Activated CD4-positive, alpha-beta T cell treated with anti-CD3 and anti-CD28 coated beads, Interleukin-2, amount 10 ng/mL, durations not matched to agents 24 days and 14 days (primary cell): ENCODE measurements at regions of chr5 and their contacts with region 1.

Region 1: DNA sequence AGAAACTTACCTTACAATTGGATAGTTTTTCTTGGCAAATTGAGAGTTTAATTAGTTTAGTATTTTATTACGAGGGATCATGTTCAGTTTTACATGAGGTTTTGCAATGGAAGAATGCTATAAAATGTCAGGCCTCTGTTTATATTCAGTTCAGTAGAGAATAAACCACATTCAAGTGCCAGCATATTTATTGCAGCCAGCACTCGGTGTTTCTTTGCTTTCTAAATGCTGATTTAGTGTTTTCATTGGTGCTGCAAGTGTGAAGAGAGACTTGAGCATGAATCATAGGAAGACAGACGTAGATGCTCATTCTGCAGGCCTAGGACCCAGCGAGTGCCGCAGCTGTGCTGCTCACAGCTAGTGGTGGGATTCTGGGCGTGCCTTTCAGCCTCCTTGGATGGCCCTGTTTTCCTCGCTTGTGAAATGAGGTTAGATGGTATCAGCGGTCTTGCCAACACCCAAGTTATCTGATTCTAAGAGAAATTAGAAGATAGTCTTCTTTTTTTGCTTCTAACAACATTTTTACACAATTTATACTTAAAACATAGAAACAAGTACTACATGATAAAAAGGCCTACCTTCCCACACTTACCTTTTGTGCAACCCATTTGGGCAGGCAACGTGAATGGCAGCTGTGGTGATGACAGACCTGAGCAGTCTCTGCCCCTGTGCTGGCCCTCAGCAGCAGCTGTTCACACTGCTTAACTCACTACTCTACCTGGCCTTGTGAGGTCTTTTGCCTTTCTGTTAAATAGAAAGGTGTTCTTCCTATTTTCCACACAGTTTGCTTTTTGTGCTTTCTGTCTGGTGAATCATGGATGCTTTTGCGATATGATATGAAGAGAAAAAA is 26.8 kb upstream of the TNFAIP8 start:
- DNase-seq: peak; percentile 86
- H3K4me3 Mint-ChIP-seq: peak overlapping the region; percentile 73
- H3K27ac Mint-ChIP-seq: peak overlapping the region; percentile 92
- H3K4me1 Mint-ChIP-seq: peaks cover 74% of the 10 kb centered on the region
- H3K27me3 Mint-ChIP-seq: no peaks in the 10 kb centered on the region

Region 2: DNA sequence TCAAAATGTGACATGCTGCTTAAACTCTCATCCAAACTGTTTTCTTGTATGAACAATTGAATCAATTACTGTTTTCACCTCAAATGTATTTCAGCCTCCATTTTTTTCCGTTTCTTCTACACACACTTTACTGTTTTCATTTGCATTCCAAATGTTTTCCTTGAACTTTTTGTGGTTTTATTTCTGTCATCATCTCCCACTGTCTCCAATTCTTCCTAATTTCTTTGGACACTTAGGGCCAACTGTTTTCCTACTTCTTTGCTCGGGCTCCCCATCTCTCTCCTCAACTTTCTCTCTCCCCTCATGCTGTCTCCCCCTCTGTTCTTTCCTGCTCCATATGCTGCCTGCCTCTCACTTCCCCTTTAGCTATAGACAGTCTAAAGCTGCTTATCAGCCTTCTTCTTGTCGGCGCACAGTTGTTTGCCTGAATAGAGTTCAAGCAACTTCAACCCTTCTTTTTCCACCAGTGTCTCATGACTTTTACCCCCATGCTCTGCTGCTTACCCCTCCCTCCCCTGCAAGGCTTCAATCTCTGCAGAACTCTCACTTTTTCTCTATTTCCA is 784.0 kb before region 1 on chr5:
- intact Hi-C with region 1: no loop called
- DNase-seq: peak; percentile 50
- H3K4me3 Mint-ChIP-seq: no peak overlapping the region
- H3K27ac Mint-ChIP-seq: no peak overlapping the region
- H3K4me1 Mint-ChIP-seq: no peaks in the 10 kb centered on the region
- H3K27me3 Mint-ChIP-seq: no peaks in the 10 kb centered on the region

Region 3: GRCh38 chr5:119274767-119275130 is 54.2 kb before region 1 on chr5:
- intact Hi-C with region 1: loop called (anchors 1 kb)
- DNase-seq: peak; percentile 78
- H3K4me3 Mint-ChIP-seq: peak overlapping the region; percentile 95
- H3K27ac Mint-ChIP-seq: peak overlapping the region; percentile 95
- H3K4me1 Mint-ChIP-seq: peaks cover 89% of the 10 kb centered on the region
- H3K27me3 Mint-ChIP-seq: no peaks in the 10 kb centered on the region

Region 4: DNA sequence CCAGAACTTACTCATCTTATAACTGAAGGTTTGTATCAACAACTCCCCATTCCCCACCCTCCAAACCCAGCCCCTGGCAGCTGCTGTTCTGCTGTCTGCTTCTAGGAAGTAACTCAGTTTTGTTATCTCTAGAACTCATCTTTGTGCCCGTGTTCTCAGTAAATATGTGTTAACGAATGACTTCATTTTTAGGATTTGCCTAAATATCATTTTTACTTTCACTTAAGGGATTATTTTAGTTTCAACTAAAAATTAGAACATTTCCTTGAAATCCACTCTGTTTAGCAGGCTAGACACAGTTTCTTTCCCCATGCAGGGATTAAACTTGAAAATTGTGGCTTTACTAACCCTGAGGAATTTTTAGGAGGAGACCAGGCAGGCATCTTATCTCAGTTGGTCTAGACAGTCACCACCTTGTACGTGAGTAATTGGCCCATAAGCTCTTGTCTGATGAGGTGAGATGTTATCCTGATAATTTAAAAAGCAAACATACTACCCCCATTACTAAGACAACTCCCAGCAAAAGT is 41.4 kb before region 1 on chr5:
- intact Hi-C with region 1: loop called (anchors 5 kb)
- DNase-seq: peak; percentile 87
- H3K4me3 Mint-ChIP-seq: peak overlapping the region; percentile 78
- H3K27ac Mint-ChIP-seq: peak overlapping the region; percentile 93
- H3K4me1 Mint-ChIP-seq: peaks cover 89% of the 10 kb centered on the region
- H3K27me3 Mint-ChIP-seq: no peaks in the 10 kb centered on the region

Region 5: DNA sequence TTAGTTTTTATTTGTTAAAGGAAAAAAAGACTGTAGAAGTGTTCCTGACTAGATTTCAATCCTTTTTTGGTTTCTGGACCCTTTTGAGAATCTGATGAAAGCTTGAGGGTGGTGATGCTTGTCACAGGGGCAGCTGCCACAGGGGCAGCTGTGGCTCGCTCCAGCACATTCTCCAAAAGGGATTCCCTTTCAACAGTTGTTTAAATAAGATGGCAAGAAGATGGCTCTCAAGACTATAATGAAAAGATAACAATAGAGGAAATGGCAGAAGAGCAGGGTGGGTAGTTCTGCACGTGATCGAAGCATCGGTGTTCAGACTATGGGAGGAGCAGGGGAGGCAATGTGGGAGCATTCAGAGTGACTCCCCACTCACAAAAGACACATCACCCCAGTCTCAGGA is 19.7 kb before region 1 on chr5:
- intact Hi-C with region 1: loop called (anchors 1 kb)
- DNase-seq: no peak
- H3K4me3 Mint-ChIP-seq: peak overlapping the region; percentile 76
- H3K27ac Mint-ChIP-seq: peak overlapping the region; percentile 94
- H3K4me1 Mint-ChIP-seq: peaks cover 79% of the 10 kb centered on the region
- H3K27me3 Mint-ChIP-seq: no peaks in the 10 kb centered on the region

Region 6: GRCh38 chr5:119315516-119315949 is 13.4 kb before region 1 on chr5:
- intact Hi-C with region 1: loop called (anchors 1 kb)
- DNase-seq: peak; percentile 86
- H3K4me3 Mint-ChIP-seq: peak overlapping the region; percentile 67
- H3K27ac Mint-ChIP-seq: peak overlapping the region; percentile 89
- H3K4me1 Mint-ChIP-seq: peaks cover 81% of the 10 kb centered on the region
- H3K27me3 Mint-ChIP-seq: no peaks in the 10 kb centered on the region

Region 7: GRCh38 chr5:119367502-119368237 is 38.7 kb after region 1 on chr5:
- intact Hi-C with region 1: loop called (anchors 1 kb)
- DNase-seq: peak; percentile 75
- H3K4me3 Mint-ChIP-seq: peak overlapping the region; percentile 78
- H3K27ac Mint-ChIP-seq: peak overlapping the region; percentile 96
- H3K4me1 Mint-ChIP-seq: peaks cover 69% of the 10 kb centered on the region
- H3K27me3 Mint-ChIP-seq: no peaks in the 10 kb centered on the region